ENCODE measurements at regions of chr3 and their contacts with region 1.

Region 1: DNA sequence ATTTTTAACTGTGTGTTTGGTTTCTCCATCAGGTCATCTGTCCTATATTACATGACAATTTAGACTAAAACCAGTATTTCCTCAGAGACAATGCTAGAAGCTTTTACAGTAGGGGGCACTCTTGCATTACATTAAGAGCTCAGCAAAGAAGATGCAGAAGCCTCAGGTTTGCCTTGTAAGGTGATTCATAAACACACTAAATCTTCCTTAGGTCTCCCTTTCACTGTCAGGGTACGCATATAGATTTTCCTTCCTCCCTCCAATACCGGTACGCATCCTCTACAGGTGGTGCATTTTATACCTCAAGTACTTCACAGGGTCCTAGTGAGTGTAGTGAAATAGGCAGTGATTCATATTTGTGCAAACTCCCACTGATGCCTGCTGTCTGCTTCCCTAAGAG is 46.5 kb downstream of the CD86 start:
- DNase-seq: peak; percentile 56
- ATAC-seq: peak; percentile 73
- H3K4me3 ChIP-seq: no peak overlapping the region
- H3K27ac ChIP-seq: no peak overlapping the region
- H3K4me1 ChIP-seq: no peaks in the 10 kb centered on the region
- H3K27me3 ChIP-seq: no peaks in the 10 kb centered on the region
- CTCF ChIP-seq: peak; percentile 67
- EP300 ChIP-seq: no peak
- POLR2A ChIP-seq: no peak
- RAD21 ChIP-seq: peak; percentile 39; the same call in 1 of the 2 replicates

Region 2: GRCh38 chr3:121629601-121630000 is 472.0 kb before region 1 on chr3:
- CTCF ChIA-PET with region 1: no interaction called
- POLR2A ChIA-PET with region 1: no interaction called
- in situ Hi-C with region 1: no loop called
- intact Hi-C with region 1: no loop called
- DNase-seq: no peak
- ATAC-seq: no peak
- H3K4me3 ChIP-seq: no peak overlapping the region
- H3K27ac ChIP-seq: no peak overlapping the region
- H3K4me1 ChIP-seq: no peaks in the 10 kb centered on the region
- H3K27me3 ChIP-seq: peaks cover 0 to 3% of the 10 kb centered on the region in 2 experiments; a peak in 1 of 5 replicates
- CTCF ChIP-seq: no peak
- EP300 ChIP-seq: no peak
- POLR2A ChIP-seq: no peak
- RAD21 ChIP-seq: no peak

Region 3: DNA sequence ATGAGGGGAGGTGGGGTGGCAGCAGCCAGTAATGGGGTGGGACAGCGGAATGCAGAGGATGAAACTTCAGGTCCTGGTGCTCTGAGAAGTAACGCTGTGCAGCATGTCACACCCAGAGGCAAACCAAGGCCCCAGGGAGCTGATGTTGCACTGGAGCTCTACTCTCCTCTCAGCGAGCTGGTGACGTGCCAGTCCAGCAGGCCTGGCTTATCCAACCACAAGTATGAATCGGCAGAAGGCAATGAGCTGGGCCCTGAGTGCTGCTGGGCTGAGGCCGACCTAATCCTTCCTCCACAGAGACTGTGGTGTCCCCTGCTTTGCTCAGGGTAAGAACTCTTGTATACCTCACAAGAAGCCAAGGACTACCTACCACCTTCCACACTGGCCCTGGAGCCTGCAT is 16.0 kb before region 1 on chr3:
- CTCF ChIA-PET with region 1: no interaction called
- POLR2A ChIA-PET with region 1: no interaction called
- in situ Hi-C with region 1: no loop called
- intact Hi-C with region 1: no loop called
- DNase-seq: no peak
- ATAC-seq: no peak
- H3K4me3 ChIP-seq: no peak overlapping the region
- H3K27ac ChIP-seq: no peak overlapping the region
- H3K4me1 ChIP-seq: no peaks in the 10 kb centered on the region
- H3K27me3 ChIP-seq: peaks cover 0 to 19% of the 10 kb centered on the region in 2 experiments; a peak in 2 of 5 replicates
- CTCF ChIP-seq: no peak
- EP300 ChIP-seq: no peak
- POLR2A ChIP-seq: no peak
- RAD21 ChIP-seq: no peak

Region 4: GRCh38 chr3:122258757-122259371 is 157.2 kb after region 1 on chr3:
- CTCF ChIA-PET with region 1: no interaction called
- POLR2A ChIA-PET with region 1: no interaction called
- in situ Hi-C with region 1: loop called (anchors 10 kb)
- intact Hi-C with region 1: loop called (anchors 1 kb)
- DNase-seq: peak; percentile 48
- ATAC-seq: peak; percentile 95
- H3K4me3 ChIP-seq: no peak overlapping the region
- H3K27ac ChIP-seq: no peak overlapping the region
- H3K4me1 ChIP-seq: no peaks in the 10 kb centered on the region
- H3K27me3 ChIP-seq: peaks cover 0 to 15% of the 10 kb centered on the region in 2 experiments; a peak in 3 of 5 replicates
- CTCF ChIP-seq: peak; percentile 86
- EP300 ChIP-seq: no peak
- POLR2A ChIP-seq: no peak
- RAD21 ChIP-seq: peak; percentile 66

Region 5: GRCh38 chr3:122299872-122300460 is 198.3 kb after region 1 on chr3:
- CTCF ChIA-PET with region 1: interaction called, 4 read pairs
- POLR2A ChIA-PET with region 1: no interaction called
- in situ Hi-C with region 1: no loop called
- intact Hi-C with region 1: loop called (anchors 1 kb)
- DNase-seq: peak; percentile 33
- ATAC-seq: peak; percentile 31; the same call in 1 of the 3 replicates
- H3K4me3 ChIP-seq: no peak overlapping the region
- H3K27ac ChIP-seq: no peak overlapping the region
- H3K4me1 ChIP-seq: peaks cover 6% of the 10 kb centered on the region
- H3K27me3 ChIP-seq: no peaks in the 10 kb centered on the region
- CTCF ChIP-seq: peak; percentile 60
- EP300 ChIP-seq: no peak
- POLR2A ChIP-seq: no peak
- RAD21 ChIP-seq: no peak; the same call in 1 of the 2 replicates

Region 6: DNA sequence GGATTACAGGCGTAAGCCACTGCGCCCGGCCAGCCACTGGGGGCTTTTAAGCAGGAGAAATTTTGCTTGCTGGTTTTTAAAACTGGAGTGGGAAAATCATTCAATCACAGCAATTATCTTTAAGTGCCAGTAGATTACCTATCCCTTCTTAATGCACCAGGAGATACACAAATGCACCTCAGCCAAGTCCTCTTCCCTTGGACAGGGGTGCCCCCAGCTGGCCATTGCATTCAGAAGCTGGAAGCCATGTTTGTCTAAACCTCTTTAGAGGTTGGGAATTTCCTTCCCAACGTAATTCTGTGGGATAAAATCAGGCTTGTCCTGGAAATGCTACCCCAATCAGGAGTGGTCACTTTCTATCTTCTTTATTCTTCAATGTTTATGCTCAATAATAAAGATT is 254.8 kb after region 1 on chr3:
- CTCF ChIA-PET with region 1: no interaction called
- POLR2A ChIA-PET with region 1: no interaction called
- in situ Hi-C with region 1: loop called (anchors 10 kb)
- intact Hi-C with region 1: loop called (anchors 2 kb)
- DNase-seq: peak; percentile 57
- ATAC-seq: peak; percentile 85
- H3K4me3 ChIP-seq: no peak overlapping the region
- H3K27ac ChIP-seq: no peak overlapping the region
- H3K4me1 ChIP-seq: no peaks in the 10 kb centered on the region
- H3K27me3 ChIP-seq: no peaks in the 10 kb centered on the region
- CTCF ChIP-seq: peak; percentile 78
- EP300 ChIP-seq: no peak
- POLR2A ChIP-seq: no peak
- RAD21 ChIP-seq: peak; percentile 74

Measured in HepG2 (cell line).